CD8-positive, alpha-beta T cell (primary cell): ENCODE measurements at regions of chr6 and their contacts with region 1.

Region 1: DNA sequence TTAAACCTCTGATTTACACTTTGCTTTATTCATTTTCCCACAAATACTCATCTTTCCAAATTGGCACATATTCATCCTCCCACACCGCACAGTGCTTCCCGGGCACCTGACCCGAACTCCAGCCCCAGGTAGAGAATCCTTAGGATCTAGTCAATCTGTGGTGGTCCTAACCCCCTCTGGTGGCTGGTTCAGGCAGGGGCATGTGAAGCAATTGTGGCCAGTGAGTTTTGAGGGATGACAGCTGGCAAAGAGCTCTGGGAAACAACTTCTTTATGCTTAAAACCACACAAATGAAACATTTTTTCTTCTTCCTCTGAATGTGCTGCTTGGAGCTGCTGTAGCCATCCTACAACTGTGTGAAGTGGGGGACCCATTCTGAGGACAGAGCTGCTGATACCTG is 54.7 kb downstream of the ELOVL5 start:
- DNase-seq: peak in 7 of 9 experiments; percentile 21 to 63 (median 45)
- ATAC-seq: peak; percentile 49
- H3K4me3 ChIP-seq: no peak overlapping the region
- H3K4me3 Mint-ChIP-seq: no peak overlapping the region
- H3K27ac ChIP-seq: peak overlapping the region in 1 of 2 experiments; percentile 6
- H3K27ac Mint-ChIP-seq: peak overlapping the region; percentile 10
- H3K4me1 ChIP-seq: peaks cover 34% of the 10 kb centered on the region
- H3K4me1 Mint-ChIP-seq: peaks cover 76% of the 10 kb centered on the region
- H3K27me3 ChIP-seq: no peaks in the 10 kb centered on the region
- H3K27me3 Mint-ChIP-seq: no peaks in the 10 kb centered on the region
- CTCF ChIP-seq: peak; percentile 66

Region 2: GRCh38 chr6:53189554-53189953 is 104.5 kb before region 1 on chr6:
- CTCF ChIA-PET with region 1: no interaction called
- POLR2A ChIA-PET with region 1: no interaction called
- intact Hi-C with region 1: loop called in 1 of 2 experiments (anchors 5 kb)
- DNase-seq: no peak
- ATAC-seq: no peak
- H3K4me3 ChIP-seq: no peak overlapping the region
- H3K4me3 Mint-ChIP-seq: no peak overlapping the region
- H3K27ac ChIP-seq: no peak overlapping the region
- H3K27ac Mint-ChIP-seq: no peak overlapping the region
- H3K4me1 ChIP-seq: peaks cover 19% of the 10 kb centered on the region
- H3K4me1 Mint-ChIP-seq: peaks cover 30% of the 10 kb centered on the region
- H3K27me3 ChIP-seq: no peaks in the 10 kb centered on the region
- H3K27me3 Mint-ChIP-seq: no peaks in the 10 kb centered on the region
- CTCF ChIP-seq: no peak

Region 3: DNA sequence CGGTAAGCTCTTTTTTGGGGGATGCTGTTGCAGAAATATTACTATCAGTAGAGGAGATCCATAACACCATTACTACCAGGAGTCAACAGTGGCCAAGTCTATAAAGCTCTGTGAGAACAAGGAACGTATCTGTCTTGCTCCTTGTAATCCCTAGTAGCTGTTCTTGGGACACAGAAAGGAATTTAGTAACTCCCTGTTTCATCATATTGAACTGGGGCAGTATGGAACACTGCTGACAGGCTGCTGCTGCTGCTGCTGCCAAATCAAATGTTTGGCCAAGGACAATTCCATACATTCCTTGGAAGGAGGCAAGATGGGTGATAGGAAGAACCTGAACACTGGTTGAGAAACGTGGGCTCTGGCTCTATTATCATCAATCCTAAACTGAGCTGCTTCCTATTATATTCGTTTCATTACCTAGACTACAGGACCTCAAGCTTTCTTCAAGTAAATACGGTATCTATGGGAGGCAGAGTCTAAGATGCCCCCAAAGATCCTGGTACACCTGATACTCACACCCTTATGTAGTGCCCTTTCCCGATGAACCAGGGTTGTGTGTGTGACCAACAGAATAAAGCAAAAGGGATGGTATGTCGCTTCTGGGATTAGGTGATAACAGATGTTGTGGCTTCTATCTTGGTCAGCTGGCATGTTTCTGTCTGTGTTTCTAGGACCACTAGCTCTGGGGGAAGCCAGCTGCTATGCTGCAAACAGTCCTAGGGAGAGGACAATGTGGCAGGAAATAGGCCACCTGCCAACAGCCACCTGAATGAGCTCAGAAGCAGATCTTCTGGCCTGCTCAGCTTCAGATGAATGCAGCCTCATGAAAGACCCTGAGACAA is 15.2 kb after region 1 on chr6:
- CTCF ChIA-PET with region 1: interaction called, 10 read pairs
- POLR2A ChIA-PET with region 1: interaction called, 6 read pairs
- intact Hi-C with region 1: loop called in 1 of 2 experiments (anchors 2 kb)
- DNase-seq: peak in 6 of 9 experiments; percentile 26 to 62 (median 34)
- ATAC-seq: peak; percentile 53
- H3K4me3 ChIP-seq: no peak overlapping the region
- H3K4me3 Mint-ChIP-seq: no peak overlapping the region
- H3K27ac ChIP-seq: peak overlapping the region in 1 of 2 experiments; percentile 38
- H3K27ac Mint-ChIP-seq: peak overlapping the region; percentile 45
- H3K4me1 ChIP-seq: peaks cover 53% of the 10 kb centered on the region
- H3K4me1 Mint-ChIP-seq: peaks cover 81% of the 10 kb centered on the region
- H3K27me3 ChIP-seq: no peaks in the 10 kb centered on the region
- H3K27me3 Mint-ChIP-seq: no peaks in the 10 kb centered on the region
- CTCF ChIP-seq: no peak

Region 4: GRCh38 chr6:53340522-53340921 is 46.4 kb after region 1 on chr6:
- CTCF ChIA-PET with region 1: interaction called, 14 read pairs
- POLR2A ChIA-PET with region 1: interaction called, 11 read pairs
- intact Hi-C with region 1: loop called in 1 of 2 experiments (anchors 5 kb)
- DNase-seq: no peak
- ATAC-seq: no peak
- H3K4me3 ChIP-seq: no peak overlapping the region
- H3K4me3 Mint-ChIP-seq: no peak overlapping the region
- H3K27ac ChIP-seq: no peak overlapping the region
- H3K27ac Mint-ChIP-seq: peak overlapping the region; percentile 24
- H3K4me1 ChIP-seq: peaks cover 71% of the 10 kb centered on the region
- H3K4me1 Mint-ChIP-seq: peaks cover 93% of the 10 kb centered on the region
- H3K27me3 ChIP-seq: no peaks in the 10 kb centered on the region
- H3K27me3 Mint-ChIP-seq: no peaks in the 10 kb centered on the region
- CTCF ChIP-seq: no peak

Region 5: DNA sequence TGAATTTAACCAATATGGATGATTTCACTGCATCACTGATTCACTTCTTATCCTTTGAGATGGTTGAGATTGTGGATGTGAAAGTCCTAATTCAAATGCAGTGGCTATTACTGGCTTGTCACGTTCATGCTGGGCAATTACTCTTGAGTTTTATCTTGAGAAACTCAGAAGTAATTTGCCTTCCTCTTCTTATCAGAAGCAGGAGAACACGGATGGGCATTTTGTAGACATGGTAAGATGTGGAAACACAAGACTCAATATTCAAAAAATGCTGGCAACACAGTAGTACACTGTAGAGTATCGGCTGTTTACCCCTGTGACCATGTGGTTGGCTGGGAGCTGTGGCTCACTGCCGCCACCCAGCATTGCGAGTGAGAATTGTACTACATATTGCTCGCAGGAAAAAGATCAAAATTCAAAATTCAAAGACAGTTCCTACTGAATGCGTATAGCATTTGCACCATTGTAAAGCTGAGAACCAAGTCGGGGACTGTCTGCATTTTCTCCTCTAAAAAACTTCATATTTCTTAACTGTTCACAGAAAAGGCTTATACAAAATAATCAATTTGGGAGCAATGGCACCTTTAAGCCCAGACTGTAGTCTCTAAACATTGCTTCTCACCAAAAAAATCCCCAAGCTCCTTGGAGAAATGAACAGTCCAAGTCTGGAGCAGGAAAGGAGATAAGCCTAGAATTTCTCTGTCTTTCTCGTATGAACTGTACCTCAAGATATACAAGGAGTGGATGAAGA is 116.6 kb after region 1 on chr6:
- CTCF ChIA-PET with region 1: interaction called, 17 read pairs
- POLR2A ChIA-PET with region 1: no interaction called
- intact Hi-C with region 1: loop called (anchors 1 to 5 kb)
- DNase-seq: peak; percentile 22 to 75 (median 56)
- ATAC-seq: peak; percentile 99
- H3K4me3 ChIP-seq: no peak overlapping the region
- H3K4me3 Mint-ChIP-seq: no peak overlapping the region
- H3K27ac ChIP-seq: no peak overlapping the region
- H3K27ac Mint-ChIP-seq: no peak overlapping the region
- H3K4me1 ChIP-seq: no peaks in the 10 kb centered on the region
- H3K4me1 Mint-ChIP-seq: peaks cover 4% of the 10 kb centered on the region
- H3K27me3 ChIP-seq: peaks cover 0 to 3% of the 10 kb centered on the region in 2 experiments
- H3K27me3 Mint-ChIP-seq: no peaks in the 10 kb centered on the region
- CTCF ChIP-seq: peak; percentile 85

Region 6: DNA sequence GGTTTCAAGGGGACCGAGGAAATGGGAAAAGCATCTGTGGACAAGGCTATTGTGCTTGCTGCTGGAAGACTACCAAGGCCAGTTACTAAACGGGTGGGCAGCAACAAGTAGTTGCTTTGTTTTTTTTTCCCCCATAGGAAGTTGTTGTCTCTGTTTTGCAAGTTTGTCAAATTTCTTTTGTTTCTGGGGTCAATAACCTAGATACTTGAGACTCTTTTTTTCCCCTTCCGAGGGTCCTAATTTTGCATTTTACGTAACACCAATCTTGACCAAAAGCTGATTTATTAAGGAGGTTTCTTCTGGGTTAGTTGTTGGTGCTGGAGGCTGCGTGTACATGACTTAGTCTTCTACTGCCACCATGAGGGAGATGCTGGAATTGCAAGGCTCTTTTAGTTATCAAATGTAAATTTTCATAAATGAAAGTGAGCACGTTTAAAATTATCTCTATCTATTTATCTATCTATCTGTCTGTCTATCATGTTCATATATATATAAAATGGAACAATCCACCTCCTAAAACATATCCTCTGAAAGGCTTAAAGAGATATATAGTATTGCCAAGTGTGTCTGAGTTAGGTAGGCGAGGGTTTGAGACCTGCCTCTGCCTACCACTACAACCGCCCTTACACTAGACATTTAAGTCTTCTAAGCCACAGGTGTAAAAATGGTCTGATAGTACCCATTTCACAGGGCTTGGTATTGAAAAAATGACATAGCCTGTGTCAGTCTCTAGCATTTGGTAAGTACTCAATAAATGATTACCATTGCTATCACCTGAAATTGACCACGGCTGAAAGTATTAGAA is 190.6 kb after region 1 on chr6:
- CTCF ChIA-PET with region 1: interaction called, 3 read pairs
- POLR2A ChIA-PET with region 1: no interaction called
- intact Hi-C with region 1: loop called (anchors 2 kb)
- DNase-seq: peak; percentile 42 to 80 (median 74)
- ATAC-seq: peak; percentile 79
- H3K4me3 ChIP-seq: no peak overlapping the region
- H3K4me3 Mint-ChIP-seq: no peak overlapping the region
- H3K27ac ChIP-seq: no peak overlapping the region
- H3K27ac Mint-ChIP-seq: no peak overlapping the region
- H3K4me1 ChIP-seq: no peaks in the 10 kb centered on the region
- H3K4me1 Mint-ChIP-seq: peaks cover 10% of the 10 kb centered on the region
- H3K27me3 ChIP-seq: peaks cover 0 to 4% of the 10 kb centered on the region in 2 experiments
- H3K27me3 Mint-ChIP-seq: peaks cover 33% of the 10 kb centered on the region
- CTCF ChIP-seq: peak; percentile 98